ENCODE measurements at regions of chr9 and their contacts with region 1.

Region 1: DNA sequence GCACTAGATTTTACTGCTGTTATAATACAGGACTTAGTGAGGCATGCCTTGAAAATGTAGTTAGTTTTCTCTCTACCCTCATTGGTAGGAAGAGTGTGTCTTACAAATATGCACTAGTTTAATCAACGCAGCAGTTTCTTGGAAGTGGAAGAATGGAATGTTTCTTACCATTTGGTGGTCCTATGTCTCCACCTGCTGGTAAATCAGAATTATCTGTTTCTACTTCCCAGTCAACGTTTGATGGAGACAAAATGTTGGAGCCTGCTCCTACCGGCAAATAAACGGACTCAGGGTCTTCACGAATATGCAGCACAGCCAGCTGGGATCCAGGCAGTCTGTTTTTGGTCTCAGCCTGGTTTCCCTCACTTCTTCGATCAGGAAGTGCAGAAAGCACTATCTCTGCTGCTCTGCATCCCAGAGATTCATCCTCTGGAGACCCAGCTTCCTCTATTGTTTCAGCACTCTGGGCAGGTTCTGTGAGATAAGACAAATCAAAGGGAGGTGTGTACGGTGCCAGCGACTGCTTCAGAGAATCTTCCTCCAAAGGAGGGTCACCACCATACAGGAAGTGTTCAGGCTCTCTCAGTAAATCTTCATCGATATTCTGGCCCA is 59.5 kb upstream of the PCA3 start:
- DNase-seq: no peak
- H3K4me3 ChIP-seq: no peak overlapping the region
- H3K27ac ChIP-seq: no peak overlapping the region
- H3K4me1 ChIP-seq: no peaks in the 10 kb centered on the region
- H3K27me3 ChIP-seq: no peaks in the 10 kb centered on the region
- CTCF ChIP-seq: peak in 2 of 3 donors; percentile 54 to 64
- EP300 ChIP-seq: no peak
- POLR2A ChIP-seq: no peak

Region 2: GRCh38 chr9:76143834-76144233 is 560.9 kb before region 1 on chr9:
- intact Hi-C with region 1: no loop called
- DNase-seq: no peak
- H3K4me3 ChIP-seq: no peak overlapping the region
- H3K27ac ChIP-seq: no peak overlapping the region
- H3K4me1 ChIP-seq: no peaks in the 10 kb centered on the region
- H3K27me3 ChIP-seq: no peaks in the 10 kb centered on the region
- CTCF ChIP-seq: no peak
- EP300 ChIP-seq: no peak
- POLR2A ChIP-seq: no peak

Region 3: DNA sequence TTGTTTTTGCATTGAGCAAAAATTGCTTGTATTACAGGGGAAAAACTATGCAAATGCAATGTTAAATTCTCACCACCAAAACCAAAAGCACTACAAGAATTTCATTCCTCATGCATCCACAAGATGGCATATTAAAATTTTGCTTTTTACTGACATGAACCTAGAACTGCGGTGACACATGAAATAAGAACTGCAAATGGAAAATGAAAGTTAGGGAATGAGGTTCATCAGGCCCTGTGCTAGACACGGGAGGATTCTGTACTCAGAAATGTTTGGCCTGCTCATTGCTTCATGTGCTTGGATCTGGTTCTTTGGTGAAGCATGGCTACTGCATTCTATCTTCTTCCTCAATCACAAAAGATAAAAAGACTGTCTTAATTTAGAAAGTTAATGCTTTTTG is 301.3 kb before region 1 on chr9:
- intact Hi-C with region 1: loop called in 1 of 4 experiments (anchors 10 kb)
- DNase-seq: no peak
- H3K4me3 ChIP-seq: no peak overlapping the region
- H3K27ac ChIP-seq: no peak overlapping the region
- H3K4me1 ChIP-seq: no peaks in the 10 kb centered on the region
- H3K27me3 ChIP-seq: no peaks in the 10 kb centered on the region
- CTCF ChIP-seq: peak in 2 of 3 donors; percentile 34 to 46
- EP300 ChIP-seq: no peak
- POLR2A ChIP-seq: no peak

Region 4: GRCh38 chr9:76441551-76442322 is 263.0 kb before region 1 on chr9:
- intact Hi-C with region 1: loop called in 3 of 4 experiments (anchors 5 to 10 kb)
- DNase-seq: no peak
- H3K4me3 ChIP-seq: no peak overlapping the region
- H3K27ac ChIP-seq: no peak overlapping the region
- H3K4me1 ChIP-seq: no peaks in the 10 kb centered on the region
- H3K27me3 ChIP-seq: no peaks in the 10 kb centered on the region
- CTCF ChIP-seq: no peak
- EP300 ChIP-seq: no peak
- POLR2A ChIP-seq: no peak

Region 5: GRCh38 chr9:77111408-77111807 is 406.7 kb after region 1 on chr9:
- intact Hi-C with region 1: no loop called
- DNase-seq: no peak
- H3K4me3 ChIP-seq: no peak overlapping the region
- H3K27ac ChIP-seq: no peak overlapping the region
- H3K4me1 ChIP-seq: no peaks in the 10 kb centered on the region
- H3K27me3 ChIP-seq: no peaks in the 10 kb centered on the region
- CTCF ChIP-seq: no peak
- EP300 ChIP-seq: no peak
- POLR2A ChIP-seq: no peak

Measured in ovary (tissue), 10 donors.